Activated CD4-positive, alpha-beta T cell treated with anti-CD3 and anti-CD28 coated beads for 36 hours (primary cell): ENCODE measurements at regions of chr22 and their contacts with region 1.

Region 1: DNA sequence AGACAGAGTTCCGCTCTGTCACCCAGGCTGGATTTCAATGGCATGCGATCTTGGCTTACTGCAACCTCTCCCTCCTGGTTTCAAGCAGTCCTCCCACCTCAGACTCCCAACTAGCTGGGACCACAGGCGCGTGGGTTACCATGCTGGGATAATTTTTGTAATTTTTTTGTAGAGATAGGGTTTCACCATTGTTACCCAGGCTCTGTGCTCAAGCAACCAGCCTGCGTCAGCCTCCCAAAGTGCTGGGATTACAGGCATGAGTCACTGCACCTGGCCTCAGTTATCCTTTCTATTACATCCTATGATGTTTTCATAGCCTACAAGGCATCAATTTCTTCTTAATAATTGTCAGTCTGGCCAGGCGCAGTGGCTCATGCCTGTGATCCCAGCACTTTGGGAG is 36.5 kb downstream of the LRRC74B start:
- DNase-seq: no peak
- ATAC-seq: no peak
- H3K4me3 Mint-ChIP-seq: no peak overlapping the region
- H3K27ac Mint-ChIP-seq: no peak overlapping the region
- H3K4me1 Mint-ChIP-seq: no peaks in the 10 kb centered on the region
- H3K27me3 Mint-ChIP-seq: no peaks in the 10 kb centered on the region

Region 2: DNA sequence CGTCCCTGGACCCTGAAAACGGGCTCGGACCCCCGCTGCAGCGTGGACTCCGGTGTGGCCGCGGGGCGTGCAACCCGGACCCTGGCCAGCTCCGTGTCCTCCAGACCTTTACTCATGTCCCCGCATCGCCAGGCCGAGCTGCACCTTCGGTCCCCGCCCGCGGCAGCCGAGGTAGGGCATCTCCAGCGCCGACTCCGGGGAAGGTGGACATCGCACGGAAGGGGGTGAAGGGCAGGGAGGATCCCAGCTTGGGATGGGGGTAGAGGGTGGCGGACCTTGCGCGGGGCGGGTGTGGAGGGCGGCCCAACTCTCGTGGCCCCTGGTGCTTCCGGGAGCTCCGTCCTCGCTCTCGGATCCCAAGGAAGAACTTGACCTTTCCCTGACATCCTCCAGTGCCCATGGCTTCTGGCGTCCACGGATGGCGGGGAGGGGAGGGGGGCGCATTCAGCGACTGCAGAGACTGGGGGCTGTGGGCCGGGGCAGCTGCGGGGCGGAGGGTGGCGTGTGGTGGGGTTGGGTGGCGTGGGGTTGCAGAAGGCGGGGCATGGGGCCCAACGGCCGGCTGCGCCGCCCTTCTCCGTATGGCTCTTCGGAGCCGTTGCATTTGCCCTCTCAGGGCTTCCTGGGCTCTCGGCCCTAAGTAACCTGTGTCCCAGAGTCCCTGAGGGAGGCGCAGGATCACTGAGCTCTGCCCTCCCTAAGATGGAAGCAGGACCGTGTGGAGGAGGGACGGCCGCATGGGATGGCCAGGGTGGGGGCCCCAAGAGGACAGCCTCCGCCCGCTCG is 124.7 kb before region 1 on chr22:
- CTCF ChIA-PET with region 1: no interaction called
- POLR2A ChIA-PET with region 1: no interaction called
- intact Hi-C with region 1: no loop called
- DNase-seq: no peak
- ATAC-seq: no peak
- H3K4me3 Mint-ChIP-seq: peak overlapping the region; percentile 26
- H3K27ac Mint-ChIP-seq: no peak overlapping the region
- H3K4me1 Mint-ChIP-seq: peaks cover 15% of the 10 kb centered on the region
- H3K27me3 Mint-ChIP-seq: peaks cover 16% of the 10 kb centered on the region

Region 3: DNA sequence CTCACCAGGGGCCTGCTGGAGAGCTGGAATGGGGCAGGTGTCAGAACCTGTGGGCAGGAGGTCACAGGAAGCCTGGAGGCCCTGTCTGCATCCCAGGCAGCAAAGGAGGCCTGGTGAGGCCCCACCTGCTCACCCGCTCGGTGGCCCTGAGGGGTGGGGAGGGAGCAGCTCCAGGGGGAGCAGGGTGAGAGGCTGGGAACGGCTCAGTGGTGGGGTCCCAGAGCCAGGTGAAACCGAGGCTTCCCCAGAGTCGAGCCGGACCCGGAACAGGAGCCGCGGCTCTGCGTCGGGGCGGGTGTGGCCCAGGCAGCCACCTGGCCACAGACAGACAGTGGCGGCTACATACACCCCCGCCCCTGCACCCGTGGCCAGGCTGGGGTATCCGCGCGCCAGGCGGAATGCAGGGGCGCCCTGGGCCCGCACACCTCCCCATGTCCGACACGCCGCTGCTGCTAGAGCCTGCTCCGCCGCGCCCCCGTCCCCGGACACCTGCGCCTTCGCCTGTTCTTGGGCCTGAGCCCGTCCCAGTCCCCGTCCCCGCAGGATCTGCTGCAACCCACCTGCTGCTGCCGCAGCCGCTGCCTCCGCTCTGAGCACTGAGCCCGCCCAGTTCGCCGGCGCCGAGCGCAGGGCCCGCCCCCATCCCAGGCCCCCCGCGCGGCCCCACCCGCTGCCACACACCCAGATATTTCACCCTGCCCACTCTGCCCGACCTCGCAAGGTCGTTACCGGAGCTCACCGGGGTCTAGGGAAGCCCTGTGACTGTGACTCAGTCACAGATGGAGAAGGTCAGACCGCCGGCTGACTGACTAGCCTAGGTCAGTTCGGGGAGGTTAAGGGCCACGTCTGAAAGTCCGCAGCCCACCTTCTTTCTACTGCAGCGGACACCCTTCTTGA is 50.0 kb before region 1 on chr22 and contains the start of gene SLC7A4:
- CTCF ChIA-PET with region 1: no interaction called
- POLR2A ChIA-PET with region 1: no interaction called
- intact Hi-C with region 1: loop called in 1 of 2 experiments (anchors 5 kb)
- DNase-seq: no peak
- ATAC-seq: peak; percentile 39
- H3K4me3 Mint-ChIP-seq: no peak within 1 kb of the TSS
- H3K27ac Mint-ChIP-seq: no peak within 1 kb of the TSS
- H3K4me1 Mint-ChIP-seq: peaks cover 2% of the 10 kb centered on the region
- H3K27me3 Mint-ChIP-seq: peaks cover 24% of the 10 kb centered on the region
- total RNA-seq, gene SLC7A4: not detected